A673 (cell line): ENCODE measurements at regions of chr5 and their contacts with region 1.

Region 1: DNA sequence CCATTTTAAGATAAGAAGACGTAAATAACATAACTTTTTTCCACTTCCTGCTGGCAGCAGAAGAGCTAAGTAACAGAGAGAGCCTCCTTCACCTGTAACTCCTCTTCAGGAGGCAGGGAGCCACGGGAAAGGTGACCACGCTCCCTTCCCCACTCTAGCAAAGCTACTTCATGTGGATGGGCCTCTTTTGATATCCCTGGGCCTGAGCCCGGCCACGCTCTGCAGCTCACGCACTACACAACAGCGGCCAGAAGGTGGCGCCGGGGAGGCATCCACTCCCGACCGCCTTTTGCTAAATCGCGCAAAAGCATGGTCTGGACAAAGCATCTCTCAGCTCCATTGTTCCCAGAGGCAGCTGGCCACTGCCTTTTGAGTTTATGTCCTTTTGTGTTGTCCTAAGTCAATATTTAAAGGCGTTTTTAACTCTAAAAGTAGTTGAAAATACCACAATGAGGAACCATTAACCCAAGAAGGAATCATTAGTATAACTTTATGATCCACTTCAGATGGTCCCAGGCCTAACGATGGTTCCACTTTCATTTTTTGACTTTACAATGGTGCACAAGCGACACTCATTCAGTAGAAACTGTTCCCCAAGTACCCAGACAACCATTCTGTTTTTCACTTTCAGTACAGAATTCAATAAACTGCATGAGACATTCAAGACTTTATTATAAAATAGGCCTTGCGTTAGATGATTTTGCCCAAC is 23.6 kb downstream of the CMBL start:
- DNase-seq: peak; percentile 88
- H3K4me3 ChIP-seq: no peak overlapping the region
- H3K27ac ChIP-seq: no peak overlapping the region
- H3K4me1 ChIP-seq: peaks cover 9% of the 10 kb centered on the region
- H3K27me3 ChIP-seq: no peaks in the 10 kb centered on the region
- CTCF ChIP-seq: peak; percentile 98

Region 2: GRCh38 chr5:10352430-10353240 is 68.6 kb after region 1 on chr5:
- CTCF ChIA-PET with region 1: no interaction called
- POLR2A ChIA-PET with region 1: no interaction called
- intact Hi-C with region 1: no loop called
- DNase-seq: no peak
- H3K4me3 ChIP-seq: peak overlapping the region; percentile 78
- H3K27ac ChIP-seq: peak overlapping the region; percentile 97
- H3K4me1 ChIP-seq: peaks cover 13% of the 10 kb centered on the region
- H3K27me3 ChIP-seq: no peaks in the 10 kb centered on the region
- CTCF ChIP-seq: no peak

Region 3: GRCh38 chr5:10424124-10424731 is 140.1 kb after region 1 on chr5:
- CTCF ChIA-PET with region 1: interaction called, 16 read pairs
- POLR2A ChIA-PET with region 1: no interaction called
- intact Hi-C with region 1: loop called (anchors 1 kb)
- DNase-seq: peak; percentile 73
- H3K4me3 ChIP-seq: no peak overlapping the region
- H3K27ac ChIP-seq: no peak overlapping the region
- H3K4me1 ChIP-seq: no peaks in the 10 kb centered on the region
- H3K27me3 ChIP-seq: no peaks in the 10 kb centered on the region
- CTCF ChIP-seq: peak; percentile 66

Region 4: DNA sequence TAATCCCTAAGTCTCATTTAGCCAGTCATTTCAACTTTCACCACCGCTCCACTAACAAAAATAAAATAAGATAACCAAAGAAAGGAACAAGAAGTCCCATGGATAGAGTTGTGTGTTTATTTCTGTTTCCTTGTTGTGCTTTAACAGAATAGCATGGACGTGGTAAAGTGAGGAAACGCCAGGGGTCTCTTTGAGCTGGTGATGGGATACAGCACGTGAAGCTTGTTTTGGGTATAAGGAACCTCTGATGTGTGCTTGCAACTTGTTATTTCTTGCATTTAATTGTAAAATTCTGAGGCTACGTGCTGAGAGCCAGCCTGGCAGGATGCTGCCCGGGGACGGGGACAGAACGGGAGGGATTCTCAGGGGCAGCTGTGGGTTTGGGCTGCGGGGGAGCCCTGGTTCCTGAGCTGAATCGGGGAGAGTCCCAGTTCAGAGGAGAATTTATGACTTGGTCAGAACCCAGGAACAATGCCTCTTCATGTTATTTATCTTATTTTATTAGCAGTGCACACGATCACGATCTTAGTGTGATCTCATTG is 343.1 kb after region 1 on chr5:
- CTCF ChIA-PET with region 1: interaction called, 18 read pairs
- POLR2A ChIA-PET with region 1: no interaction called
- intact Hi-C with region 1: loop called (anchors 1 kb)
- DNase-seq: no peak
- H3K4me3 ChIP-seq: peak overlapping the region; percentile 34
- H3K27ac ChIP-seq: no peak overlapping the region
- H3K4me1 ChIP-seq: peaks cover 6% of the 10 kb centered on the region
- H3K27me3 ChIP-seq: no peaks in the 10 kb centered on the region
- CTCF ChIP-seq: no peak